Activated CD8-positive, alpha-beta T cell treated with anti-CD3 and anti-CD28 coated beads, Interleukin-2, amount 10 ng/mL, durations not matched to agents 7 days and 5 days (primary cell): ENCODE measurements at regions of chr9 and their contacts with region 1.

Region 1: DNA sequence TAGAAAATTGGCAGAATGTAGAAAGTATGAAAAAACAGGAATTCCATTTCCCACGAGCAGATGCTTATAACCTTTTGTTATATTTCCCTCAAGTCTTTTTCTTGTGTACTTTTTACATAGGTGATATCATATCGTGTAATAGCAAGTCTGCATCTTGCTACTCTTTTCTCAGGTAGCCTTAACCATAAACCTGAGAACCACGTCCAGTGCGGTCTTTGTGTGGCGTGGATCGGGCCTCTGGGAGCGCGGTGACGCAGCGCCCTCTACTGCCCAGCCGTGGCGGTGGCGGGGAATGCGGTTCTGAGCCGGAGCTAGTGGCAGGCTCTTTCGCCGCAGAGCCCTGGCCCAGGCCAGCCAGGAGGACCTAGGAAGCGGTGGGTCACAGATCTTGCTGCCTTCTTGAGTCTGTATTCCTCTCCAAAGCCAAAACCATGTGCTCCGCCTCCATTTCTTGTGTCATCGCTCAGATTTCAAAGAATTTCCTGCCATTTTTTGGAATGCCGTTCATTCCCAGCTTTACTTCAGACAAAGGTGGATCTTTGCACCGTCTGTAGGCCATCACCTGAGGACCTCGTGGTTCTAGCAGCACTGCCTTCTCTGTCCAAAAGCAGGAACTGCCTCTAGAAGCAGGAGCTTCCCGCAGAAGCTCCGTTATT is 71.9 kb downstream of the MVB12B start:
- DNase-seq: peak; percentile 81
- ATAC-seq: peak; percentile 45
- H3K4me3 Mint-ChIP-seq: peak overlapping the region; percentile 32
- H3K27ac Mint-ChIP-seq: peak overlapping the region; percentile 72
- H3K4me1 Mint-ChIP-seq: peaks cover 91% of the 10 kb centered on the region
- H3K27me3 Mint-ChIP-seq: no peaks in the 10 kb centered on the region

Region 2: GRCh38 chr9:126203126-126203712 is 195.3 kb before region 1 on chr9:
- CTCF ChIA-PET with region 1: no interaction called
- POLR2A ChIA-PET with region 1: no interaction called
- DNase-seq: no peak
- ATAC-seq: no peak
- H3K4me3 Mint-ChIP-seq: no peak overlapping the region
- H3K27ac Mint-ChIP-seq: no peak overlapping the region
- H3K4me1 Mint-ChIP-seq: no peaks in the 10 kb centered on the region
- H3K27me3 Mint-ChIP-seq: peaks cover 21% of the 10 kb centered on the region

Region 3: GRCh38 chr9:126301985-126302603 is 96.4 kb before region 1 on chr9:
- CTCF ChIA-PET with region 1: interaction called, 96 read pairs
- POLR2A ChIA-PET with region 1: interaction called, 3 read pairs
- DNase-seq: peak; percentile 77
- ATAC-seq: peak; percentile 81
- H3K4me3 Mint-ChIP-seq: no peak overlapping the region
- H3K27ac Mint-ChIP-seq: no peak overlapping the region
- H3K4me1 Mint-ChIP-seq: peaks cover 14% of the 10 kb centered on the region
- H3K27me3 Mint-ChIP-seq: peaks cover 11% of the 10 kb centered on the region

Region 4: DNA sequence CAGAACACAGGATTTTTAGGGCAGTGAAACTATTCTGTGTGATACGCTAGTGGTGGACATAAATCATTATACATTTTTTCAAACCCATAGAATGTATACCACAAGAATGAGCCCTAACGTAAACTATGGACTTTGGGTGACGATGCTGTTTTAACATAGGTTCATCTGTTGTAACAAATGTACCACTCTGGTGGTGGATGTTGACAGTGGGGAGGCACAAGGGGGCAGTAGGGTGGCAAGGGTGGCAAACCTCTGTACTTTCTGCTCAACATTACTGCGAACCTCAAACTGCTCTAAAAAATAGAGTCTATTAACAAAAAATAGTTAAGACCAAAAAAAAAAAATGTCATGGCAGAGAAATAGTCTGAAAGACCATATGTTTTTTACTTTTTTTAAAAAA is 81.0 kb before region 1 on chr9:
- CTCF ChIA-PET with region 1: interaction called, 67 read pairs
- POLR2A ChIA-PET with region 1: no interaction called
- DNase-seq: peak; percentile 54
- ATAC-seq: peak; percentile 53
- H3K4me3 Mint-ChIP-seq: no peak overlapping the region
- H3K27ac Mint-ChIP-seq: no peak overlapping the region
- H3K4me1 Mint-ChIP-seq: peaks cover 26% of the 10 kb centered on the region
- H3K27me3 Mint-ChIP-seq: peaks cover 9% of the 10 kb centered on the region

Region 5: DNA sequence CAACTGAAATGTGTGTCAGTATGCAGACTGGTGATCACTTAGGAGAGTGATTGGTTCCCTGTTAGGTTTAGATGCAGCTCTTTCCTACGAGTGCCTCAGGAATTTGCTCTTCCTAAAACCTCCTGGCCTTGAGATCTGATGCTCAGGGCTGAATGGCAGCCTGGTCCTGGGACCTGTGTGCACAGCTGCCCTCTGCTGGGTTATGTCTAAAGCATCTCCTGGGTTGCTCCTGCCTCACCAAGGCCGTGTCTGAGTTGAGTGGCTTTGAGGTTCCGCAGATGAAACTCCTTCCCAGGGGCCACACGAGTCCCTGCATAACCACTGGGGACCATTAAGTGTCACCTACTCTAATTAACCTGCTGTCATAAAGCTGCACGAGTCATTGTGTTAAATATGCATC is 12.4 kb before region 1 on chr9:
- CTCF ChIA-PET with region 1: interaction called, 19 read pairs
- POLR2A ChIA-PET with region 1: no interaction called
- DNase-seq: no peak
- ATAC-seq: no peak
- H3K4me3 Mint-ChIP-seq: no peak overlapping the region
- H3K27ac Mint-ChIP-seq: no peak overlapping the region
- H3K4me1 Mint-ChIP-seq: peaks cover 22% of the 10 kb centered on the region
- H3K27me3 Mint-ChIP-seq: no peaks in the 10 kb centered on the region

Region 6: DNA sequence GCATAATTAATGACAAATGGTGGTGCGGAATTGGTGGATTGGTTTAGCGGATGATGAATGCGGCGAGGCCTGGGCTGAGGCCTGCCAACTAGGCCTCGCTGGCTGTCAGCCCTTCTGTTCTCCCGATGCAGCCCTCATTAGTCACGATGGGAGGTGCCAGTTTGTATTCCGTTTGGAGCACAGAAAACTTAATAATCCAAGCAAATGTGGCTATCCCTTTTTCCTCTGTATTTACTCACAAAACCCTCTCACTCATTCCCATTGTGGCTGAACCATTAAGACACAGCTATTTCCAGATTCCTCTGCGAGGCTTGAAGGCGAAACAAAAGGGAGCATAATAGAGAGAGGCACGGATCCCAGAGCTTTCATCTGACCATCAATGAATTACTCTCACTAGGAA is 42.4 kb after region 1 on chr9:
- CTCF ChIA-PET with region 1: interaction called, 11 read pairs
- POLR2A ChIA-PET with region 1: interaction called, 3 read pairs
- DNase-seq: no peak
- ATAC-seq: no peak
- H3K4me3 Mint-ChIP-seq: no peak overlapping the region
- H3K27ac Mint-ChIP-seq: no peak overlapping the region
- H3K4me1 Mint-ChIP-seq: peaks cover 24% of the 10 kb centered on the region
- H3K27me3 Mint-ChIP-seq: no peaks in the 10 kb centered on the region

Region 7: DNA sequence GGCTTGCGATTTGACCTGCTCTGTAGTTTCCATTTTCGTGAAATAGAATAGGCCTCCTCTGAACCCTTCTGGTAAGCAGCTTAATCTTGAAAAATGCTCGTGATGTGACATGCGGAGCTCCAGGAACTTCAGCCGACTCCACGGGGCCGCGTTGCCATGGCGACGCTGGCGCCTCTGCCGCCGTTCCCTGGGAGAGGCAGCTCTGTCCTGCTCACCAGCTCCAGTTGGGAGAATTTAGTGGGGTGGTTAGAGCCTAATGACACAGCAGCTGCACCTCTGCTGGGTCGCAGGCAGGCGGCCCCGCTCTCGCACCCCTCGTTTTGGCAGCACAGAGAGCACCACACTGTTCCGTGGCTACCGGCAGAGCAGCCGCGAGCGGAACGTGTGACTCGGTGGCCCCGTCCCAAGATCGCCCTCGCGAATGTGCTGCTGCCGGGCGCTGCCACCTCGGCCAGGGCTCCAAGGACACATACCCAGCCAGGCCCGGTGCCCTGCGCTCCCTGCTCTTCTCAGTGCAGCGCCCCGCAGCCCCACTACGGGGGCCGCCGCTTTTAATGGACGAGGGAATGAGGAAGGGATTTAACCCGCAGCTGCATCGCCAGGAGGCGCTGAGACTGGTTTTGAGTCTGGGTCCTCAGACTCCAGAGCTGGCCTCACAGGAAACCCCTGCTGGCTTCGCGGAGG is 84.0 kb after region 1 on chr9:
- CTCF ChIA-PET with region 1: interaction called, 17 read pairs
- POLR2A ChIA-PET with region 1: no interaction called
- DNase-seq: no peak
- ATAC-seq: no peak
- H3K4me3 Mint-ChIP-seq: no peak overlapping the region
- H3K27ac Mint-ChIP-seq: no peak overlapping the region
- H3K4me1 Mint-ChIP-seq: peaks cover 24% of the 10 kb centered on the region
- H3K27me3 Mint-ChIP-seq: no peaks in the 10 kb centered on the region